Activated naive CD4-positive, alpha-beta T cell treated with anti-CD3 and anti-CD28 coated beads, Interleukin-2, amount 10 ng/mL, durations not matched to agents 7 days and 5 days (primary cell): ENCODE measurements at regions of chr5 and their contacts with region 1.

Region 1: DNA sequence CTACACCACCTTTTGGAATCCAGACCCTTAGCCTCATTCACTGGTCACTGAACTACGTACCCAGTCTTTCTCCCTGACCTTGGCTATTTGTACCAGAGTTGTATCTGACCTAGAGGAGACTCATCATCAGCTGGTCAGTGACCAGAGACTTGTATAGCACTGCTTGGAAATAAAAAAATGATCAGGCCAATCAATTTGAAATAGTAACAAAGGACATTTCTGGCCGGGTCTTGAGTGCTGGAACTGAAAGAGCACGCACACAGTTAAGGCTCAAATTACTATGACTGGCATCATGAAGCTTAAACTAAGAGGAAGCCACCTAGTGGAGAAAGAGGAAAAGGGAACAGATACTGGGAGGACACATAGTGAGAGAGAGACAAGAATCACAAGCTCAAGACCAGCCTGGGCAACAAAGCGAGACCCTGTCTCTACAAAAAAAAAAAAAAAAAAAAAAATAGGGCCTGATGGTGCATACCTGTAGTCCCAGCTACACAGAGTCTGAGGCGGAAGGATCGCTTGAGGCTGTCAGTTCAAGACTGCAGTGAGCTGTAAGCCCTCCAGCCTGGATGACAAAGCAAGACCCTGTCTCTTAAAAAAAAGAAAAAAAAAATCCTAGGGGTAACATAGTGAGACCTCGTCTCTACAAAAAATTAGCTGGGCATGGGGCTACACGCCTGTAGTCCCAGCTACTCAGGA is 12.8 kb upstream of the SRP19 start:
- DNase-seq: no peak
- H3K4me3 Mint-ChIP-seq: no peak overlapping the region
- H3K27ac Mint-ChIP-seq: no peak overlapping the region
- H3K4me1 Mint-ChIP-seq: peaks cover 4% of the 10 kb centered on the region
- H3K27me3 Mint-ChIP-seq: peaks cover 25% of the 10 kb centered on the region

Region 2: GRCh38 chr5:112691758-112692157 is 156.5 kb before region 1 on chr5:
- CTCF ChIA-PET with region 1: interaction called, 18 read pairs
- DNase-seq: peak; percentile 57
- H3K4me3 Mint-ChIP-seq: no peak overlapping the region
- H3K27ac Mint-ChIP-seq: no peak overlapping the region
- H3K4me1 Mint-ChIP-seq: no peaks in the 10 kb centered on the region
- H3K27me3 Mint-ChIP-seq: peaks cover 48% of the 10 kb centered on the region

Region 3: DNA sequence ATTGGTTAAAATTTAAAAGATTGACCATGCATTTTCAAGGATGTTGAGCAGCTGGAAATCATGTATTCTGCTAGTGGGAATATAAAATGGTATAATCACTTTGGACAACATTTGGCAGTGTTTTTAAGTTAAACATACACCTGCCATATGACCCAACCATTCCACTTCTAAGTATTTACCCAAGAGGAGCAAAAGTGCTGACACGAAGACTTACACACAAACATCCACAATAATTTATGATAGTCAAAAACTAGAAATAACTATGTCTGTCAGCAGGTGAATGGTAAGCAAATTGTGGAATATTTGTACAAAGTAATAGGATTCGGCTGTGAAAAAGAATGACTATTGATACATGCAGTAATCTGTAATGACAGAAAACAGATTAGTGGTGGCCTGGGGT is 17.9 kb before region 1 on chr5:
- CTCF ChIA-PET with region 1: interaction called, 11 read pairs
- DNase-seq: no peak
- H3K4me3 Mint-ChIP-seq: no peak overlapping the region
- H3K27ac Mint-ChIP-seq: no peak overlapping the region
- H3K4me1 Mint-ChIP-seq: no peaks in the 10 kb centered on the region
- H3K27me3 Mint-ChIP-seq: no peaks in the 10 kb centered on the region

Region 4: DNA sequence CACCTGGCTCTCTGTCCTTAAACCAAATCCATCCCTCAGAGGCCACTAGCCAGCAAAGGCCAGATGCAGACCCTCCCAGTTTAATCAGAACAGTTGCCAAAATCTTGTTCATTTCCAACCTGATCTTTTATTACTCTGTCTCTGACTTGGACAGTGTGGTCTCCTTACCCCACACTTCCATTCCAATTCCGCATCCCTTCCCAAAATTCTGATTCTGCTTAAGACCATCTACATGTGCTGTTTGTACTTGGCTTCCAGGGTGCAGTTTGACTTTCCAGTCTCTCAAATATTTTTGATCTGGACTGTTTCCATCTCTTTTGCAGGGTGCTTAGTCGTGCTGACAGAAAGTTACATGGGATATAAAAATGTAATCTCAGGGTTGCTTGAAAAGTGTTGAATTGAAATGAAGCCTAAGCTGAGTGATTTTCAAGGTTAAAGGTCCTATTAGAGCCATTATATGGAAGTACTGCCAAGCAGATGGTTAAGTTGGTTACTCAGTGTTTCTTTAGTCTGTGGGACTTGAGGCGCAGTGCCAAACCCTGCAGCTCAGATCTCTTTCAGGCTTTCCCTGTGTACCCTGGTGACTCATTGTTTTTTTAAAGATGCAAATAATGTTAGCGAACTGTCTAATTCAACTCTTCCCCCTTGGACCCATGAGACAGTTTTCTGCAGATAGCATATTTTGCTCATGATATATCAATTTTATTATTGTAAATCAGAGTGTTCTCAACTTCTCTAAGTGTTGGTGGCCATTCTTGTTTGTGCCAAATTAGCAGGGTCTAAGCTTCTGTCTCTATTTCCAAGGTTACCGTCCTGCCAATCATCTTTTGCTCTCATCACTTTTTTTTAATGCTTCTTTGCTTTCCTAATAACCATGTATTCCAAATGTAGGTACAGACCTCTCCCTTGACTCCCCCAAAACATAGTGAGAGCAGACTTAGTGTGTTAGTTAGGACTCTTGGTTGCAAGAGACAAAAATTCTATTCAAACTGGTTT is 110.1 kb after region 1 on chr5:
- CTCF ChIA-PET with region 1: no interaction called
- DNase-seq: no peak
- H3K4me3 Mint-ChIP-seq: no peak overlapping the region
- H3K27ac Mint-ChIP-seq: no peak overlapping the region
- H3K4me1 Mint-ChIP-seq: peaks cover 27% of the 10 kb centered on the region
- H3K27me3 Mint-ChIP-seq: peaks cover 5% of the 10 kb centered on the region